PC-3 (cell line): ENCODE measurements at regions of chr3 and their contacts with region 1.

Region 1: DNA sequence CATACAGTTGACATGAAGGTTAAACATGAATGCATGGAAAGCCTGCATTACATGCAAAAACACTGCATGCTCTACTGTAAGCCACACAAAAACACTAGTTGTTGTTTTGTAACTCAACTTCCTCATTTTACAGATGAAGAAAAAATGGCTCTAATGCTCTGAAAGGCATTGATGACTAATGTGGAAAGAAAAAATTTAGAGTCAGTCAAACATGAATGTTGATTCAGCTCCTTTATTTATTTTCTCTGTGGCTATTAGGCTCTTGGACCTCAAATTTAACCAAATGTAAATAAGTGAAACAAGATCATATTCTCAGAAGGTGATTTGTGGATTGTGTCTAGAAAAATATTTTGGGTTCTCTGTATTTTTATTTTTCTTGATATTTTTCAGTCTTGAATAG is 336.7 kb upstream of the ZNF717 start:
- DNase-seq: peak; percentile 79
- ATAC-seq: peak; percentile 77
- H3K4me3 ChIP-seq: no peak overlapping the region
- H3K27ac ChIP-seq: no peak overlapping the region
- H3K4me1 ChIP-seq: peaks cover 25% of the 10 kb centered on the region
- H3K27me3 ChIP-seq: no peaks in the 10 kb centered on the region
- CTCF ChIP-seq: no peak

Region 2: GRCh38 chr3:76010252-76010651 is 111.8 kb before region 1 on chr3:
- CTCF ChIA-PET with region 1: no interaction called
- POLR2A ChIA-PET with region 1: no interaction called
- intact Hi-C with region 1: no loop called
- DNase-seq: no peak
- ATAC-seq: no peak
- H3K4me3 ChIP-seq: no peak overlapping the region
- H3K27ac ChIP-seq: no peak overlapping the region
- H3K4me1 ChIP-seq: no peaks in the 10 kb centered on the region
- H3K27me3 ChIP-seq: peaks cover 6% of the 10 kb centered on the region
- CTCF ChIP-seq: no peak

Region 3: DNA sequence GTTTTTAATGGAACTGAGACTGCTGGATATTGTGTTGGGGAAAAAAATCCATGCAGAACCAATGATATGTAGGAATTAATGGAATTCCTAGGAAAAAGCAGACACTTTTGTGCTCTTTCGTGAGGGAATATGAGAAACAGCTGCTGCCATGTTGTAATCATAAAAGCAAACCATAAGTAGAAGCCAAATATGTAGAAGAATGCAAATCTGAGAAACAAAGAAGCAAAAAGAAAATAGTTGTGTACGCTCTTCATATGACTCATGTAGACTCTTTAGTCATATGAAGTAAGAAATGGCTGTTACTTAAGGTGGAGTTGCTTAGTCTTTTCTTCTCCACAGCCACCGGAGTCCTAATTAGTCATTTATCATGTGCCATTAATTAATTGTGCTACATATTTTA is 38.0 kb before region 1 on chr3:
- CTCF ChIA-PET with region 1: no interaction called
- POLR2A ChIA-PET with region 1: no interaction called
- intact Hi-C with region 1: no loop called
- DNase-seq: no peak
- ATAC-seq: no peak
- H3K4me3 ChIP-seq: no peak overlapping the region
- H3K27ac ChIP-seq: no peak overlapping the region
- H3K4me1 ChIP-seq: no peaks in the 10 kb centered on the region
- H3K27me3 ChIP-seq: no peaks in the 10 kb centered on the region
- CTCF ChIP-seq: no peak

Region 4: GRCh38 chr3:76152028-76152427 is 30.0 kb after region 1 on chr3:
- CTCF ChIA-PET with region 1: no interaction called
- POLR2A ChIA-PET with region 1: no interaction called
- intact Hi-C with region 1: loop called (anchors 1 kb)
- DNase-seq: no peak
- ATAC-seq: no peak
- H3K4me3 ChIP-seq: no peak overlapping the region
- H3K27ac ChIP-seq: no peak overlapping the region
- H3K4me1 ChIP-seq: peaks cover 8% of the 10 kb centered on the region; the same call in 1 of the 2 replicates
- H3K27me3 ChIP-seq: no peaks in the 10 kb centered on the region
- CTCF ChIP-seq: no peak

Region 5: DNA sequence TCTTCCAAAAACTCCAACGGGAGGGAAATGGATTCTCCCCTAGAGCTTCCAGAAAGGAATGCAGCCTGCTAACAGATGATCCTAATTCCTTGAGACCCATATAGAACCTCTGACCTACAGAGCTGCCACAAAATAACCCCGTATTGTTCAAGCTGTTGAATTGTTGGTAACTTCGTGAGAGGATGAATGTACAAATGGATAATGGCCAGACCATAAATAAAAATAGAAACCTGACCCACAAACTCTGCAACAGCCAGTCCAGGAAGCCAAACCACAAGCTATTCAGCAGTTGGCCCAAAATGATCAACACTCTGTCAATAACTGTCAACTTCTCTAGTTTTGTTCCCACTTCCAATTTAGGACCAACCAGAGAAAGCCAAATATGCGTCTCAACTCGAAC is 77.4 kb after region 1 on chr3:
- CTCF ChIA-PET with region 1: no interaction called
- POLR2A ChIA-PET with region 1: no interaction called
- intact Hi-C with region 1: no loop called
- DNase-seq: peak; percentile 46
- ATAC-seq: peak; percentile 55
- H3K4me3 ChIP-seq: no peak overlapping the region
- H3K27ac ChIP-seq: no peak overlapping the region
- H3K4me1 ChIP-seq: peaks cover 5% of the 10 kb centered on the region; the same call in 1 of the 2 replicates
- H3K27me3 ChIP-seq: no peaks in the 10 kb centered on the region
- CTCF ChIP-seq: no peak